ENCODE measurements at regions of chr12 and their contacts with region 1.

Region 1: GRCh38 chr12:6752921-6753771 is at the start of gene MLF2:
- DNase-seq: peak; percentile 98
- ATAC-seq: peak; percentile 87
- H3K4me3 ChIP-seq: peak within 1 kb of the TSS; percentile 75 to 93 (median 79)
- H3K4me3 Mint-ChIP-seq: peak within 1 kb of the TSS; percentile 96
- H3K27ac ChIP-seq: peak within 1 kb of the TSS; percentile 93 to 96
- H3K27ac Mint-ChIP-seq: peak within 1 kb of the TSS; percentile 99
- H3K4me1 ChIP-seq: peaks cover 13 to 14% of the 10 kb centered on the region in 2 donors
- H3K4me1 Mint-ChIP-seq: peaks cover 17% of the 10 kb centered on the region
- H3K27me3 ChIP-seq: no peaks in the 10 kb centered on the region
- H3K27me3 Mint-ChIP-seq: peaks cover 4% of the 10 kb centered on the region
- CTCF ChIP-seq: peak; percentile 89
- total RNA-seq, gene MLF2: 97.2 and 106 TPM in 2 replicates

Region 2: DNA sequence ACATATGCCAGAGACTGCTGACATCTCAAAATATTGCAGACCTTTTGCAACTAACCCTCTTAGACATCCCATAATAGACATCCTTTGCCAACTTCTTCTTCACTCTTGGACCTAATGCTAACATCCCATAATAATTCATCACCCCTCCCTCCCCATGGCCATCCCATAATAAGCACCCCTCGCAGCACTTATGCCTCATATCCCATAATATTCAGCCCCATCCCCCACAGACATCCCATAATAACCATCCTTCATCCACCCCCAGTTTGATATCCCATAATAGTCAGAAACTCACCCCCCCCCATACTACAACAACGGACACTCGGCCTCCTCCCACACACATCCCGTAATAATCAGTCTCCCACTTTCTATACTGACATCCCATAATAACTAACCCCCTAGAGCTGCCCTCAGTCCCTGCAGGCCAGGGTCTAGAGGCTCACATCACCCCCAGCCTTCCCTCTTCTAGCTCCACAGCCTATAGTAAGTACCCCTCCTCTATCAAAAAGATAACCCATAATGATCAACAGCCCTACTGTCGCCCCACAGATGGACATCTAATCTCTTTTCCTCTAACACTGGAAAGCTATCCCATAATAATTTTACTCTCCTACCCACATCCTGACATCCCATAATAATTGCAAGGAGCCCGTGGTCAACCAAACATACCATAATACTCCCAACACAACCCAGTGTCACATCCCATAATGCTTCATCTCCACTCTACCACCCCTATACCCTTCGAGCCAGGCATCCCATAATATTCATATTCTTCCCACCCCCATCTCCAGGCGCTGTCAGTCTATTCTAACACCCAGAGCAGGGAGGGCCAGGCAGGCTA is 145.2 kb before region 1 on chr12:
- CTCF ChIA-PET with region 1: interaction called, 6 read pairs
- POLR2A ChIA-PET with region 1: no interaction called
- intact Hi-C with region 1: loop called (anchors 2 kb)
- DNase-seq: peak; percentile 90
- ATAC-seq: peak; percentile 20
- H3K4me3 ChIP-seq: no peak overlapping the region
- H3K4me3 Mint-ChIP-seq: no peak overlapping the region
- H3K27ac ChIP-seq: peak overlapping the region; percentile 90 to 95
- H3K27ac Mint-ChIP-seq: no peak overlapping the region
- H3K4me1 ChIP-seq: peaks cover 56 to 63% of the 10 kb centered on the region in 2 donors
- H3K4me1 Mint-ChIP-seq: peaks cover 58% of the 10 kb centered on the region
- H3K27me3 ChIP-seq: no peaks in the 10 kb centered on the region
- H3K27me3 Mint-ChIP-seq: no peaks in the 10 kb centered on the region
- CTCF ChIP-seq: no peak

Region 3: GRCh38 chr12:6676962-6677361 is 76.2 kb before region 1 on chr12:
- CTCF ChIA-PET with region 1: no interaction called
- POLR2A ChIA-PET with region 1: no interaction called
- intact Hi-C with region 1: no loop called
- DNase-seq: no peak
- ATAC-seq: no peak
- H3K4me3 ChIP-seq: no peak overlapping the region
- H3K4me3 Mint-ChIP-seq: no peak overlapping the region
- H3K27ac ChIP-seq: no peak overlapping the region
- H3K27ac Mint-ChIP-seq: no peak overlapping the region
- H3K4me1 ChIP-seq: no peaks in the 10 kb centered on the region
- H3K4me1 Mint-ChIP-seq: peaks cover 4% of the 10 kb centered on the region
- H3K27me3 ChIP-seq: no peaks in the 10 kb centered on the region
- H3K27me3 Mint-ChIP-seq: no peaks in the 10 kb centered on the region
- CTCF ChIP-seq: no peak

Region 4: DNA sequence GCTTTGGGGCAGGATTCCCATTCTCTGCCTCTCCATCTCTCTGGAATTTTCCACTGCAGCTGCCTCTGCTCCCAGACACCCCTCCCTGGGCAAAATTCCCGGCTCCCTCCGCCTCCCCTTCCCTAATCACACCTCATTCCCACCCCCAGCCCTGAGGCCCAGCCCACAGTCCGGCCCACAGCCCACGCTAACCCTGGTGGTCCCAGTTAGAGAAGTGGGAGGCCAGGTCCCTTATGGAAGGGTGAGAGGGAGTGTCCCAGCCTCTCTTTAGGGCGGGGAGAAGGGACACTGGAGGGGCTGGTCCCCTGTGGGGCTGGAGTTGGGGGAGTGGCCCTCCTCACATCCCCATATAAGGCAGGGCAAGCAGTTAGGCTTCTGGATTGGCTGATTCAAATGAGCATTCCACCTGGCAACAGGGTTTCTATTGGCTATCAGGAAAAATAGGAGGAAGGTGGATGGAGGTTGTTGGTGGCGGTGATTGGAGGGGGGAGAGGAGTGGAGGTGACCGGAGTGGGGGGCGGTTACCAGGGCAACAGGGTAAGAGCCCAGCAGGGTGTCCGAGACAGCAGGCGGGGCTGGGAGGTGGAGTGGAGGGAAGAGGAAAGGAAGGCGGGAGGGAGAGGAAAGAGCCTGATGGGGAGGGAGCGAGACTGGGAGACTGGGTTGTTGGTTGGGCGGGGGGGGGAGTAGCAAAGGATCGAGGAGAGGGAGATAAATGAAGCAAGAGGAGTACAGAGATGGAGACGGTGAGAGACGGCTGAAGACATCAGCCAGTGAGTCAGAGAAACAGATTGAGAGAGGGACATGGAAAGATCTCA is 11.1 kb after region 1 on chr12:
- CTCF ChIA-PET with region 1: interaction called, 85 read pairs
- POLR2A ChIA-PET with region 1: interaction called, 16 read pairs
- intact Hi-C with region 1: loop called (anchors 1 kb)
- DNase-seq: peak; percentile 80
- ATAC-seq: peak; percentile 72
- H3K4me3 ChIP-seq: peak overlapping the region in 1 of 5 experiments; percentile 14
- H3K4me3 Mint-ChIP-seq: peak overlapping the region; percentile 61
- H3K27ac ChIP-seq: no peak overlapping the region
- H3K27ac Mint-ChIP-seq: peak overlapping the region; percentile 28
- H3K4me1 ChIP-seq: peaks cover 33 to 36% of the 10 kb centered on the region in 2 donors
- H3K4me1 Mint-ChIP-seq: peaks cover 29% of the 10 kb centered on the region
- H3K27me3 ChIP-seq: peaks cover 0 to 44% (median 27%) of the 10 kb centered on the region in 4 experiments
- H3K27me3 Mint-ChIP-seq: peaks cover 43% of the 10 kb centered on the region
- CTCF ChIP-seq: no peak

Region 5: GRCh38 chr12:6810758-6811157 is 57.6 kb after region 1 on chr12:
- CTCF ChIA-PET with region 1: interaction called, 13 read pairs
- POLR2A ChIA-PET with region 1: no interaction called
- intact Hi-C with region 1: no loop called
- DNase-seq: no peak
- ATAC-seq: no peak
- H3K4me3 ChIP-seq: no peak overlapping the region
- H3K4me3 Mint-ChIP-seq: no peak overlapping the region
- H3K27ac ChIP-seq: no peak overlapping the region
- H3K27ac Mint-ChIP-seq: no peak overlapping the region
- H3K4me1 ChIP-seq: peaks cover 0 to 9% of the 10 kb centered on the region in 2 donors
- H3K4me1 Mint-ChIP-seq: peaks cover 8% of the 10 kb centered on the region
- H3K27me3 ChIP-seq: peaks cover 0 to 13% (median 0%) of the 10 kb centered on the region in 4 experiments
- H3K27me3 Mint-ChIP-seq: peaks cover 10% of the 10 kb centered on the region
- CTCF ChIP-seq: no peak

Region 6: DNA sequence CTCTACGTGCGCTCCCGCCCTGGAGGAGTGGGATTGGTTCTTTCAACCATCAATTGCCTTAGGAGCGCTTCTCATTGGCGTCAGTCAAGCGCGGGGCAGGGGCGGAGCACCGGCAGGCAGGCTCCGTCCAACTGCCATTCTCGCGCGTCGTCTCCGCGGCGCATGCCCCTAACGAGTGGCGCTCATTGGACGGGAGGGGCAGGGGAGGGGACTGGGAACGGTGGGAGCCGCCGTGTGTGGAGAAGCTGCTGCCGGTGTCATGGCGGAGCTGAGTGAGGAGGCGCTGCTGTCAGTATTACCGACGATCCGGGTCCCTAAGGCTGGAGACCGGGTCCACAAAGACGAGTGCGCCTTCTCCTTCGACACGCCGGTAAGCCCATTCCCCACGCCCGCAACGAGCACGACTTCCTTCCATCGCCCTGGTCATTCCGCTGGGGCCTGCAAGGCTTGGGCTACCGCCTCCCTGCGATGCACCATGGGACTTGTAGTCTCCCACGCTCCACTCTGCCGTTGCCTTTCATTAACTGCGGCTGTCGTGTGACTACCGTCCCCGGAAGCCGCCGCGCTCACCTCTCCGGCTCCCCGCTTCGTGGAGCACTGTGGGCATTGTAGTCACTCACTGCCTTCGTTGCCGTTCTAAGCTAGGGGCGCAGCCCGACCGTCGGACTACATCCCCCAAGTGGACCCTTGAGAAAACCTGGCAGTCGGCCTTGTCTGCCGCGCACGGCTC is 98.9 kb after region 1 on chr12 and contains the start of gene USP5:
- CTCF ChIA-PET with region 1: interaction called, 15 read pairs
- POLR2A ChIA-PET with region 1: interaction called, 15 read pairs
- intact Hi-C with region 1: loop called (anchors 1 kb)
- DNase-seq: peak; percentile 100
- ATAC-seq: peak; percentile 76
- H3K4me3 ChIP-seq: peak within 1 kb of the TSS; percentile 85 to 98 (median 92)
- H3K4me3 Mint-ChIP-seq: peak within 1 kb of the TSS; percentile 92
- H3K27ac ChIP-seq: peak within 1 kb of the TSS; percentile 91
- H3K27ac Mint-ChIP-seq: peak within 1 kb of the TSS; percentile 93
- H3K4me1 ChIP-seq: peaks cover 6 to 23% of the 10 kb centered on the region in 2 donors
- H3K4me1 Mint-ChIP-seq: peaks cover 23% of the 10 kb centered on the region
- H3K27me3 ChIP-seq: no peaks in the 10 kb centered on the region
- H3K27me3 Mint-ChIP-seq: no peaks in the 10 kb centered on the region
- CTCF ChIP-seq: no peak
- total RNA-seq, gene USP5: 56.8 and 59.7 TPM in 2 replicates

Region 7: GRCh38 chr12:6904280-6905278 is 151.4 kb after region 1 on chr12 and contains the start of gene LRRC23:
- CTCF ChIA-PET with region 1: no interaction called
- POLR2A ChIA-PET with region 1: no interaction called
- intact Hi-C with region 1: no loop called
- DNase-seq: peak; percentile 98
- ATAC-seq: peak; percentile 98
- H3K4me3 ChIP-seq: peak within 1 kb of the TSS; percentile 59 to 86 (median 74)
- H3K4me3 Mint-ChIP-seq: no peak within 1 kb of the TSS
- H3K27ac ChIP-seq: peak within 1 kb of the TSS; percentile 82 to 94
- H3K27ac Mint-ChIP-seq: no peak within 1 kb of the TSS
- H3K4me1 ChIP-seq: peaks cover 14 to 24% of the 10 kb centered on the region in 2 donors
- H3K4me1 Mint-ChIP-seq: peaks cover 6% of the 10 kb centered on the region
- H3K27me3 ChIP-seq: no peaks in the 10 kb centered on the region
- H3K27me3 Mint-ChIP-seq: no peaks in the 10 kb centered on the region
- CTCF ChIP-seq: no peak
- total RNA-seq, gene LRRC23: 14.4 and 15.5 TPM in 2 replicates

Region 8: GRCh38 chr12:6965026-6965661 is 212.0 kb after region 1 on chr12:
- CTCF ChIA-PET with region 1: no interaction called
- POLR2A ChIA-PET with region 1: no interaction called
- intact Hi-C with region 1: loop called (anchors 1 kb)
- DNase-seq: peak; percentile 93
- ATAC-seq: peak; percentile 57
- H3K4me3 ChIP-seq: no peak overlapping the region
- H3K4me3 Mint-ChIP-seq: no peak overlapping the region
- H3K27ac ChIP-seq: peak overlapping the region; percentile 30 to 63
- H3K27ac Mint-ChIP-seq: peak overlapping the region; percentile 91
- H3K4me1 ChIP-seq: peaks cover 58 to 69% of the 10 kb centered on the region in 2 donors
- H3K4me1 Mint-ChIP-seq: peaks cover 63% of the 10 kb centered on the region
- H3K27me3 ChIP-seq: no peaks in the 10 kb centered on the region
- H3K27me3 Mint-ChIP-seq: no peaks in the 10 kb centered on the region
- CTCF ChIP-seq: peak; percentile 88

Measured in B cell (primary cell).